PC-9 (cell line): ENCODE measurements at regions of chr2 and their contacts with region 1.

Region 1: DNA sequence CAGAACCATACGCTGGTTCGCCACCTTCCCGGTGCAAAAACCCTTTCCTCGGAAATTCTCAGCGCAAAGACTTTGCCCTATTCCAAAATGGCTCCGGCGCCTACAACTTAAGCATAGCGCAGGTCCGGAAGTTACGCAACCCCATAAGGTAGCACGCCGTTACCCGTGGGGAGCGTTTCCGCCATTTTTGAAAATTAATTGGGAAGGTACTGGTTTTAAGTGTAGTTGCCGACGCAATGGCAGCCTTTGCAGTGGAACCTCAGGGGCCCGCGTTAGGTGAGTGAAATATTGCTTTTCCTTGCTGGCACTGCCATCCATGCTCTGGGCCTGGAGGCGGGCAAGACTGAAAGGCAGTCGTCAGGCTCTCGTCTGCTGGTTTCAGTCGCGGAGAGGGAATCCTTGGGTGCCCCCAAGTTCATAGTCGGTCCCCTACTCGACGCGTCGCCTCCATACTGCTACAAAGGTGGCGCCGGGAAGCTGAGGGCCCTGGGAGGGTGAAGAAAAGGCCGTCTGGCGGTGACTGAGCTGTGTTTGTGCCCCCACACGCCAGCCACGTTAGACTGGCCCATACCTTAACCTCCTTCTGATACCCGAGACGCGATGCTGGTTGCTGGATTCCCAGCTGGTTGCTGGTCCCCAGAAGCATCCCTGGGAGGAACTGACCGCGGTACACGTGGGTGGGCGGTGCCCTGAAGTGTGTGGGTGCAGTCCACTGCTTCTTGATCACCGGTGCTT is at the start of gene NUP35:
- DNase-seq: peak; percentile 94
- H3K4me3 ChIP-seq: peak within 1 kb of the TSS; percentile 62
- H3K27ac ChIP-seq: peak within 1 kb of the TSS; percentile 82
- H3K4me1 ChIP-seq: peaks cover 30% of the 10 kb centered on the region
- H3K27me3 ChIP-seq: no peaks in the 10 kb centered on the region
- CTCF ChIP-seq: no peak
- total RNA-seq, gene NUP35: 27.0 and 35.5 TPM in 2 replicates

Region 2: GRCh38 chr2:182915369-182916326 is 208.7 kb before region 1 on chr2:
- CTCF ChIA-PET with region 1: no interaction called
- POLR2A ChIA-PET with region 1: no interaction called
- intact Hi-C with region 1: loop called (anchors 10 kb)
- DNase-seq: peak; percentile 39 to 83
- H3K4me3 ChIP-seq: no peak overlapping the region
- H3K27ac ChIP-seq: peak overlapping the region; percentile 33
- H3K4me1 ChIP-seq: peaks cover 20% of the 10 kb centered on the region
- H3K27me3 ChIP-seq: no peaks in the 10 kb centered on the region
- CTCF ChIP-seq: no peak

Region 3: GRCh38 chr2:183019718-183020442 is 104.5 kb before region 1 on chr2:
- CTCF ChIA-PET with region 1: no interaction called
- POLR2A ChIA-PET with region 1: interaction called, 11 read pairs
- intact Hi-C with region 1: no loop called
- DNase-seq: no peak
- H3K4me3 ChIP-seq: no peak overlapping the region
- H3K27ac ChIP-seq: no peak overlapping the region; the same call in 1 of the 2 replicates
- H3K4me1 ChIP-seq: no peaks in the 10 kb centered on the region
- H3K27me3 ChIP-seq: no peaks in the 10 kb centered on the region
- CTCF ChIP-seq: no peak

Region 4: GRCh38 chr2:183038341-183039300 is 85.8 kb before region 1 on chr2 and contains the start of gene NCKAP1:
- CTCF ChIA-PET with region 1: no interaction called
- POLR2A ChIA-PET with region 1: interaction called, 3 read pairs
- intact Hi-C with region 1: loop called (anchors 1 kb)
- DNase-seq: peak; percentile 79 to 99
- H3K4me3 ChIP-seq: peak within 1 kb of the TSS; percentile 91
- H3K27ac ChIP-seq: peak within 1 kb of the TSS; percentile 87
- H3K4me1 ChIP-seq: peaks cover 35% of the 10 kb centered on the region
- H3K27me3 ChIP-seq: no peaks in the 10 kb centered on the region
- CTCF ChIP-seq: peak; percentile 73
- total RNA-seq, gene NCKAP1: 274 and 308 TPM in 2 replicates